H1 (cell line): ENCODE measurements at regions of chr2 and their contacts with region 1.

Region 1: GRCh38 chr2:197434541-197435513 is at the start of gene SF3B1:
- DNase-seq: peak; percentile 91 to 98
- H3K4me3 ChIP-seq: peak within 1 kb of the TSS; percentile 83 to 100 (median 98)
- H3K27ac ChIP-seq: peak within 1 kb of the TSS; percentile 99
- H3K4me1 ChIP-seq: peaks cover 0 to 5% (median 4%) of the 10 kb centered on the region in 4 experiments; a peak in 4 of 7 replicates
- H3K27me3 ChIP-seq: no peaks in the 10 kb centered on the region
- CTCF ChIP-seq: no peak
- EP300 ChIP-seq: no peak
- POLR2A ChIP-seq: peak; percentile 79 to 91
- RAD21 ChIP-seq: no peak
- total RNA-seq, gene SF3B1: 294 and 320 TPM in 2 replicates

Region 2: DNA sequence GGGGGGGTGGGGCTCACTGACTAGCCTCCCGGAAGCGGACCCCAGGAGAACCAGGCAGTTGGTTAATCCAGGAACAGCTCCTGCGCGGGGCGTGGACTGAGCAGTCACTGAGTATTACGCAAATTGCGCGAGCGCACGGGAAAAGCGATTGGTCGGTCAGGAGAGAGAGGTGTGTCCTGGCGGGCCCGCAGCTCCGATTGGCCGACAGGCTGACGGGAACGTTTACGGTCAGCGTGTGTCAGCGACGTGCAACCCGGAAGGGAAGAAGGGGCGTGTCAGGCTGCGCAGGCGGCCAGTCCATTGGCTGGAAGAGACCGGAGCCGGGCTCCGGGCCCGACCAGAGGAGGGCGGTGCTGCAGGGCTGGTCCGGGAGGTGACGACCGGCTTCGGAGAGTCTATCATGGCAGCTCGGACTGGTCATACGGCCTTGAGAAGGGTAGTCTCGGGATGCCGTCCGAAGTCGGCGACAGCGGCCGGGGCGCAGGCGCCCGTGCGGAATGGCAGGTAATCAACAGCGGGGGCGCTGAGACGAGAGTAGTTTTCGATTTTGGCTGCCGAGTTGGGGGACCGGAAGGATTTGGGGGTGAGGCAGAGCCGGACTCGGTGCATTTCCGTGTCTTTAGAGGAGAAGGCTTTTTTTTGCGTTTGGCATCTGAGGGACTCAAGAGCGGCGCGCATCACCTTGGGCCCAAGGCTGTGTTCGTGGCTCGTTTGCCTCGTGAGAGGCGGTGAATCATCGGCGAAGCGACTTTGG is 18.5 kb after region 1 on chr2 and contains the start of gene COQ10B:
- CTCF ChIA-PET with region 1: interaction called, 4 read pairs
- POLR2A ChIA-PET with region 1: interaction called, 23 read pairs
- DNase-seq: peak; percentile 96 to 99
- H3K4me3 ChIP-seq: peak within 1 kb of the TSS; percentile 87 to 97 (median 93)
- H3K27ac ChIP-seq: peak within 1 kb of the TSS; percentile 87
- H3K4me1 ChIP-seq: peaks cover 0 to 5% (median 0%) of the 10 kb centered on the region in 4 experiments; a peak in 2 of 7 replicates
- H3K27me3 ChIP-seq: no peaks in the 10 kb centered on the region
- CTCF ChIP-seq: peak; percentile 0 to 23 (median 20); a peak in 2 of 4 replicates
- EP300 ChIP-seq: peak in 1 of 2 experiments; percentile 65; a peak in 1 of 3 replicates
- POLR2A ChIP-seq: peak; percentile 32 to 92
- RAD21 ChIP-seq: no peak
- total RNA-seq, gene COQ10B: 17.0 and 17.3 TPM in 2 replicates

Region 3: DNA sequence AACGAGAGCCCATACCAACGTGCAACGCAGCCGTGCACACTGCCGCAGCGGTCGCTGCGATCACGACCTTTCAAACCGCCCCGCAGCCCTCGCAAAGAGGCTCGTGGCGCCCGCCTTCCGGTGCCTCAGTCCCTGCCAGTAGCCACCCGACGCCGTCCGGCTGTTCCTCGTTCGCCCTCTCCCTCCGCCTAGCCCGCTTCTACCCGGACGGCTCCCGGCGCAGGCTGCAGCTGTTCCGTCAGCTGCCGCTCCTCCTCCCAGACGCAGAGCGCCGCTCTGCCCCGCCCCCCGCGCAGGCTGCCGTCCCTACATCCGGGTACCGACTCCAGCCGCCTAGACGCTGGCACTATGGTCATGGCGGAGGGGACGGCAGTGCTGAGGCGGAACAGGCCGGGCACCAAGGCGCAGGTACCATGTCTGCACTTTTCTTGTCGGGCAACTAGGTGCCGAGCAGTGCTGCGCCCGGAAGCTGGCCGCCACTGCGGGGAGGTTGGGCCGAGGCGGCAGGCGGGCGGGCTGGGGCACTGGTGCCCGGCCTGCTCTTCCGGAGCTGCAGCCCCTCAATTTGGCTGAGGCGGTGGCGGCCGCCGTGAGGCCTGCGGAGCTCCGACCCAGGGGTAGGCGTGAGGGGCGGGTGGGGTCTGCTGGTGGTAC is 81.0 kb after region 1 on chr2 and contains the start of gene MOB4:
- CTCF ChIA-PET with region 1: no interaction called
- POLR2A ChIA-PET with region 1: interaction called, 10 read pairs
- DNase-seq: peak; percentile 92 to 96
- H3K4me3 ChIP-seq: peak within 1 kb of the TSS; percentile 75 to 96 (median 90)
- H3K27ac ChIP-seq: peak within 1 kb of the TSS; percentile 81; the same call in 1 of the 2 replicates
- H3K4me1 ChIP-seq: peaks cover 0 to 9% (median 5%) of the 10 kb centered on the region in 4 experiments; a peak in 5 of 7 replicates
- H3K27me3 ChIP-seq: no peaks in the 10 kb centered on the region
- CTCF ChIP-seq: no peak
- EP300 ChIP-seq: peak; percentile 86 to 100; a peak in 2 of 3 replicates
- POLR2A ChIP-seq: peak; percentile 91 to 92
- RAD21 ChIP-seq: peak; percentile 15 to 18; a peak in 2 of 4 replicates
- total RNA-seq, gene MOB4: 46.8 and 54.2 TPM in 2 replicates